ENCODE measurements at regions of chr17 and their contacts with region 1.

Region 1: DNA sequence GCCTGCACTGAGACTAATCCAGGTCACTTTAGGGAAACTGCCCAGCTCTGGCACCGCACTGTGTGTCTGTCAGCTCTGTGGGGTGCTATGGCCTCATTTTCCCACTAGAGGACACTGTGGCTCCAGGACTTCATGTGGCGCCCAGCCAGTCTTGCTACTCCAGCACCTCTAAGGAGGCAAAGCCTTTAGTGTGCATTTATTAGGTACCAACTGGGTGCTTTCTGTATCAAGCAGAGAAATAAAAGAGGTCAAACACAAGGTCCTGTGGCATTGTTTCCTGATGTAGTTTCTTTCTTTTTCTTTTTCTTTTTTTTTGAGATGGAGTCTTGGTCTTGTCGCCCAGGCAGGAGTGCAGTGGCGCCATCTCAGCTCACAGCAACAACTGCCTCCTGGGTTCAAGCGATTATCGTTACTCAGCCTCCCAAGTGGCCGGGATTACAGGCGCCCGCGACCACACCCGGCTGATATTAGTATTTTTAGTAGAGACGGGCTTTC is 12.5 kb upstream of the RHBDL3 start:
- DNase-seq: peak; percentile 67 to 78 (median 77)
- H3K4me3 ChIP-seq: no peak overlapping the region
- H3K4me3 Mint-ChIP-seq: no peak overlapping the region
- H3K27ac ChIP-seq: no peak overlapping the region
- H3K27ac Mint-ChIP-seq: no peak overlapping the region
- H3K4me1 ChIP-seq: no peaks in the 10 kb centered on the region
- H3K4me1 Mint-ChIP-seq: peaks cover 2% of the 10 kb centered on the region
- H3K27me3 ChIP-seq: peaks cover 0 to 3% of the 10 kb centered on the region in 2 donors
- H3K27me3 Mint-ChIP-seq: peaks cover 8 to 14% (median 9%) of the 10 kb centered on the region in 3 donors
- CTCF ChIP-seq: peak; percentile 99

Region 2: GRCh38 chr17:32341857-32342602 is 88.9 kb after region 1 on chr17 and contains the start of gene C17orf75:
- intact Hi-C with region 1: loop called in 1 of 2 experiments (anchors 5 kb)
- DNase-seq: peak; percentile 45 to 56 (median 52)
- H3K4me3 ChIP-seq: peak within 1 kb of the TSS; percentile 73 to 78 (median 75)
- H3K4me3 Mint-ChIP-seq: peak within 1 kb of the TSS; percentile 90 to 93
- H3K27ac ChIP-seq: peak within 1 kb of the TSS; percentile 60 to 78
- H3K27ac Mint-ChIP-seq: peak within 1 kb of the TSS; percentile 85 to 94 (median 92)
- H3K4me1 ChIP-seq: peaks cover 23 to 32% of the 10 kb centered on the region in 2 donors
- H3K4me1 Mint-ChIP-seq: peaks cover 31% of the 10 kb centered on the region
- H3K27me3 ChIP-seq: no peaks in the 10 kb centered on the region
- H3K27me3 Mint-ChIP-seq: peaks cover 0 to 3% (median 2%) of the 10 kb centered on the region in 3 donors
- CTCF ChIP-seq: no peak
- polyA plus RNA-seq, gene C17orf75: 4.1 to 5.7 (median 5.0) TPM

Region 3: GRCh38 chr17:32355649-32356377 is 102.6 kb after region 1 on chr17:
- intact Hi-C with region 1: loop called in 1 of 2 experiments (anchors 5 kb)
- DNase-seq: no peak
- H3K4me3 ChIP-seq: no peak overlapping the region
- H3K4me3 Mint-ChIP-seq: peak overlapping the region in 1 of 2 donors; percentile 6
- H3K27ac ChIP-seq: peak overlapping the region in 1 of 2 donors; percentile 61
- H3K27ac Mint-ChIP-seq: peak overlapping the region in 6 of 7 donors; percentile 14 to 69 (median 37)
- H3K4me1 ChIP-seq: peaks cover 16 to 41% of the 10 kb centered on the region in 2 donors
- H3K4me1 Mint-ChIP-seq: peaks cover 31% of the 10 kb centered on the region
- H3K27me3 ChIP-seq: no peaks in the 10 kb centered on the region
- H3K27me3 Mint-ChIP-seq: no peaks in the 10 kb centered on the region
- CTCF ChIP-seq: no peak